ENCODE measurements at regions of chr2 and their contacts with region 1.

Region 1: DNA sequence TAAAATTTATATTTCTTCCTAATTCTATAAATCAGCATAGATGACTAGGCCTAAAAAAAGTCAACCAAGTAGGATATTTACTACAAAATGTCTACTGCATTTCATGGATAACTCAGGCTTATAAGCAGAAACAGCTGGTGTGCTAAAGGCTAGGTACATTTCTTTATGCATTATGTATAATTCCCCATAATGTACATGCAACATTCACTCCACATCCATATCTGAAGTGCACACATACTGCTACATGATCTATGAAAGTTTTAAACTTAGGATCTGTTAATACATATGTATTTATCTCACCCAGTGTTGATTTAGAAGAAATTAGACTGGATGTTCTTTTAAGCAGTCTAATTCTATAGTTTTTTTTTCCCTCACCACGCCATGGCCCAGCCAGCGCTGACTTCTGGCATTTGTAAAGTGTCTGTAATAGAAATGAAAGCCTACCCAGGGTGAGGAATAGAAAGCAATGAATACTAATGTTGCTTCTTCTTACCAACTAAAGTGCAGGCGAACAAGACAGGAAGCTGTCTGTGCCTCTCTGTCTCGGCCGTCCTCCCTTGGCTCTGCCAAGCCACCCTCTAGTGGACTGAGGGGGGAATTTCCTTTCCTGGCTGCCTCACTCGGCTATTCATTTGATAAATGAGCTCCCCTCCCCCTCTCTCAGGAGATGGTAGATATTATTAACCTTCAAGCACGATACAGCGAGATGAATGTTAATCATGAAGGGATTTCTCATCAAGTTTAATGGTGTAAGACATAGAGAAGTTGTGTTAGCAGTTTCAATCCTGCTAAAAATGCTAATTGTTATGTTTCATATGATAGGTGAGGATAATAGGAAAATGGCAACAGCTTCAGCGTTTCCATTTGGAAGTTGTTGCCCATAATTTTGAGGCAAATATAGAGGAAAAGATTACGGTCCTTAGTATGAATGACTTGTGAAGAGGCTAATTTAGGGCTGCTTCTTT is 384.5 kb downstream of the MTX2 start:
- DNase-seq: peak in 1 of 2 experiments; percentile 49
- H3K4me3 ChIP-seq: no peak overlapping the region
- H3K27ac ChIP-seq: no peak overlapping the region
- H3K4me1 ChIP-seq: no peaks in the 10 kb centered on the region; a peak in 1 of 7 replicates
- H3K27me3 ChIP-seq: no peaks in the 10 kb centered on the region; a peak in 1 of 7 replicates
- CTCF ChIP-seq: peak; percentile 81 to 89 (median 81)
- EP300 ChIP-seq: no peak
- POLR2A ChIP-seq: no peak
- RAD21 ChIP-seq: peak; percentile 55 to 71

Region 2: GRCh38 chr2:176126929-176127773 is 526.6 kb before region 1 on chr2:
- CTCF ChIA-PET with region 1: interaction called, 72 read pairs
- POLR2A ChIA-PET with region 1: no interaction called
- DNase-seq: peak in 1 of 2 experiments; percentile 83
- H3K4me3 ChIP-seq: no peak overlapping the region
- H3K27ac ChIP-seq: no peak overlapping the region
- H3K4me1 ChIP-seq: peaks cover 0 to 14% (median 9%) of the 10 kb centered on the region in 4 experiments; a peak in 6 of 7 replicates
- H3K27me3 ChIP-seq: peaks cover 94 to 100% (median 98%) of the 10 kb centered on the region in 4 experiments
- CTCF ChIP-seq: peak; percentile 31 to 74 (median 68)
- EP300 ChIP-seq: no peak
- POLR2A ChIP-seq: no peak
- RAD21 ChIP-seq: peak; percentile 85 to 86

Region 3: DNA sequence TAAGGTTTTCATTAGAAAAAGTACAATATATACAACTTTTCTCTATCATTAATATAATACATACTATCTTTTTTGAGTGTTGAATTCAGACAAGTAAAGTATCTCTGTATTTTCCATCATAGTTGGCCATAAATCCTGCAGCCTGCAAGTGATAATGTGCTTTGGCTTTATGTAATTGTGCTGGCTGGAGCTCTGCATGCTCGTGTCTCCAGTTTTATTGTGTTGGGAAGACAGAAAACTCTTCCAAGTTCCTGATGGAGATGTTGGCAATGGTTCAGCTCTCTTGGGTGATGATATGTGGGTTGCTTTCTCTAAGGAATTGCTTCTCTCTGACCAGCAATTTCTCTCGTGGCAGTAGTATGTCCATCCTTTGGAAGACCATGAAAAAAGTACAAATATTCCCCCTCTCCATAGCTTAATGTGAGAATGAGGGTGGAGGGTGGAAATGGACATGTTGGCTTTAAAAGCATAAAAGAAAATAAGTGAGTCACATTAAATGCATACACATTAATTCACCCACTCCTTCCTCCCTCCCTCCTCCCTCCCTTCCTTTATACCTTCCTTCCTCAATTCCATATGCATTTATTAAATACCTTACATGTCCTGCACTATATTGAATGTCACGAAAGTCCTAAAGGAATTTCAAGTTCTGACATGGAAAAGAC is 40.3 kb before region 1 on chr2:
- CTCF ChIA-PET with region 1: interaction called, 10 read pairs
- POLR2A ChIA-PET with region 1: no interaction called
- DNase-seq: no peak
- H3K4me3 ChIP-seq: no peak overlapping the region
- H3K27ac ChIP-seq: no peak overlapping the region
- H3K4me1 ChIP-seq: no peaks in the 10 kb centered on the region
- H3K27me3 ChIP-seq: no peaks in the 10 kb centered on the region
- CTCF ChIP-seq: no peak
- EP300 ChIP-seq: no peak
- POLR2A ChIP-seq: no peak
- RAD21 ChIP-seq: no peak

Region 4: DNA sequence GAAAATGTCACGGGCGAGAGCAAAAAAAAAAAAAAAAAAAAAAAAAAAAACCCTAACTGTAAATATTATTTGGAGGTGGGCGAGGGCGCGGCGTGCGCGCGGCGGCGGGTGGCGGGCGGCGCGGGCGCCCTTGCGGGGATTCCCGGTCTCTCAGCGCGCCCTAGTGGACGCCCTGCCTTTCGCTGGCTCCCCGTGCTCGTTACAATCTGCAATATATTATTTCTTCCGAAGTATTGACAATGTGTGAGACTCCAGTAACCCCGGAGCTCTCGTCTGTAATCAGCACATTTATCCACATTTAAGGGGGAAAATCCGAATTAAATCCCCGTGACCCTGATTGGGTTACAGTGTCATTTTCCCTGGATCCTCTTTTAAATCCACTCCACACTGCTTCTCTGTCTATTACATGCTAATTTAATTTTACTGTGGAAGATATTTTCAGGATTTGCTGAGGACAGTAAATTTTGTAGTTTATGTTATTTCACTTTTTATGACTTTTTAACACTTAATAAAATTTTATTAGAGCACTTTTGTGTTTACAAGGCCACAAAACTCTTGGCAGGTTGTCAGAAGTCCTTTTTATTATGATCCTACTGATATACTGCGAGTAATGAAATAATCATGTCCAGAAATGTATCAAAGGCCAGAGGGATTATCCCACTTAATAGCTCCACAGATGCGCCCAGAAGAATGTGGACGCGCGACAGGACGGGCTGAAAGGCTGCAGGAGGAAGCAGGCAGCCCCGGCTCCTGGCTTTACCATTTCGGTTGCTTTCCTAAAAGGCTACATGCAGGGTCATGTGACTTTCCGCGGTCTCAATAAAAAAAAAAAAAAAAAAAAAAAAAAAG is 15.4 kb before region 1 on chr2:
- CTCF ChIA-PET with region 1: interaction called, 107 read pairs
- POLR2A ChIA-PET with region 1: no interaction called
- DNase-seq: peak in 1 of 2 experiments; percentile 79
- H3K4me3 ChIP-seq: peak overlapping the region; percentile 34 to 68 (median 45)
- H3K27ac ChIP-seq: no peak overlapping the region
- H3K4me1 ChIP-seq: peaks cover 0 to 5% (median 0%) of the 10 kb centered on the region in 4 experiments; a peak in 2 of 7 replicates
- H3K27me3 ChIP-seq: peaks cover 12 to 35% (median 20%) of the 10 kb centered on the region in 4 experiments
- CTCF ChIP-seq: peak; percentile 56 to 79 (median 78)
- EP300 ChIP-seq: no peak
- POLR2A ChIP-seq: no peak
- RAD21 ChIP-seq: peak; percentile 81 to 88

Region 5: GRCh38 chr2:176682278-176682677 is 28.5 kb after region 1 on chr2:
- CTCF ChIA-PET with region 1: interaction called, 23 read pairs
- POLR2A ChIA-PET with region 1: no interaction called
- DNase-seq: no peak
- H3K4me3 ChIP-seq: no peak overlapping the region
- H3K27ac ChIP-seq: no peak overlapping the region
- H3K4me1 ChIP-seq: peaks cover 0 to 5% (median 3%) of the 10 kb centered on the region in 4 experiments; a peak in 3 of 7 replicates
- H3K27me3 ChIP-seq: no peaks in the 10 kb centered on the region
- CTCF ChIP-seq: no peak
- EP300 ChIP-seq: no peak
- POLR2A ChIP-seq: no peak
- RAD21 ChIP-seq: no peak

Region 6: DNA sequence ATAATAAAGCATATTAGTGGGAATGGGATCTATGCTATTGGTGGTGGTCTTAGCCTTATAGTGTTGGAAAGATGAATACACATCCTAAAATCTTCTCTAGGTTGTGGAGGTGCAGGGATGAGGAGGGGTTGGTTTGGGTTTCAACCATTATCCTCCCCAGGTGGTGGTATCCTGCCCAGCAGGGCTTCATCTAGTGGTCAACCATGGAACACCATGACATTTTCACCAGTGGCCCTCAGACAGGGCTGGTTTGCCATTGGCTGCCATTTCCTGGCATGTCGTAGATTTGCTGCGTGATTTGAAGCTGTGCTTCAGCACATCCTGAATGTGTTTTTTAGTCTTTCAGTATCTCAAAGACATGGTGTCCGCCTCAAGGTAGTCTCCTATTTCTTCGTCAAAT is 167.6 kb after region 1 on chr2:
- CTCF ChIA-PET with region 1: interaction called, 21 read pairs
- POLR2A ChIA-PET with region 1: no interaction called
- DNase-seq: no peak
- H3K4me3 ChIP-seq: no peak overlapping the region
- H3K27ac ChIP-seq: no peak overlapping the region
- H3K4me1 ChIP-seq: peaks cover 4 to 19% (median 12%) of the 10 kb centered on the region in 4 experiments; a peak in 5 of 7 replicates
- H3K27me3 ChIP-seq: no peaks in the 10 kb centered on the region; a peak in 1 of 7 replicates
- CTCF ChIP-seq: no peak
- EP300 ChIP-seq: no peak
- POLR2A ChIP-seq: no peak
- RAD21 ChIP-seq: no peak

Measured in H1 (cell line).